ENCODE measurements at regions of chr17 and their contacts with region 1.

Region 1: GRCh38 chr17:59331129-59331928 is at the start of gene YPEL2:
- DNase-seq: peak; percentile 86 to 90 (median 88)
- H3K4me3 ChIP-seq: peak within 1 kb of the TSS; percentile 53 to 73
- H3K4me3 Mint-ChIP-seq: peak within 1 kb of the TSS; percentile 90 to 94 (median 93)
- H3K27ac ChIP-seq: peak within 1 kb of the TSS; percentile 62
- H3K27ac Mint-ChIP-seq: peak within 1 kb of the TSS; percentile 86 to 94 (median 92)
- H3K4me1 ChIP-seq: peaks cover 79% of the 10 kb centered on the region
- H3K4me1 Mint-ChIP-seq: peaks cover 53 to 83% (median 64%) of the 10 kb centered on the region in 4 donors
- H3K27me3 ChIP-seq: no peaks in the 10 kb centered on the region
- H3K27me3 Mint-ChIP-seq: no peaks in the 10 kb centered on the region
- total RNA-seq, gene YPEL2: 42.2 to 42.4 TPM

Region 2: DNA sequence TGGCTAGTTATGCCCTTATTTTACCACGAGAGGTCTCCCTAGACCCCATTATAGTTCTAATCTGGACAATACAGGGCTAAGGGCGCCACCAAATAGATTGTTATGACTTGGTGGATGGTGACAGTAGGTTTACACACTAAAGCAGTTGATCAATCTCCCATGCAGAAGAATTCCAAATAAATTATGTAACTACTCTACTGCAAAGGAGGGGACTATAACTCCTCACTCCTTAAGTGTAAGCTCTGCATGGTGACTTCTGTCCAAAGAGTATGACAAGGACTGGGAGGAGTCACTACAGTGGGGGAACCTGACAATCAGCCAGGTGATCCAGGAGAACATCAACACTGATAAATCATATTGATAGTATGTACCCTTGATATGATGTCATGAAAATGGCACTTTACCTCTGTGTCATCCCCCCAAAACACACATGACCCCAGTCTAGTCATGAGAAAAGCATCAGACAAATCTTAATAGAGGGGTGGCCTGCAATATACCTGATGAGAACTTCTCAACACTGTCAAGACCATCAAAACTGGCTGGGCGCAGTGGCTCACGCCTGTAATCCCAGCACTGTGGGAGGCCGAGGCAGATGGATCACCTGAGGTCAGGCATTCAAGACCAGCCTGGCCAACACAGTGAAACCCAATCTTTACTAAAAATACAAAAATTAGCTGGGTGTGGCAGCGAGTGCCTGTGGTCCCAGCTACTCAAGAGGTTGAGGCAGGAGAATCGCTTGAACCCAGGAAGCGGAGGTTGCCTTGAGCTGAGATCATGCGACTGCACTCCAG is 20.0 kb before region 1 on chr17:
- CTCF ChIA-PET with region 1: interaction called, 32 read pairs
- POLR2A ChIA-PET with region 1: interaction called, 8 read pairs
- intact Hi-C with region 1: loop called (anchors 1 kb)
- DNase-seq: peak; percentile 50 to 68 (median 63)
- H3K4me3 ChIP-seq: no peak overlapping the region
- H3K4me3 Mint-ChIP-seq: no peak overlapping the region
- H3K27ac ChIP-seq: no peak overlapping the region
- H3K27ac Mint-ChIP-seq: peak overlapping the region in 1 of 7 donors; percentile 23
- H3K4me1 ChIP-seq: no peaks in the 10 kb centered on the region
- H3K4me1 Mint-ChIP-seq: peaks cover 0 to 4% (median 4%) of the 10 kb centered on the region in 4 donors
- H3K27me3 ChIP-seq: no peaks in the 10 kb centered on the region
- H3K27me3 Mint-ChIP-seq: no peaks in the 10 kb centered on the region

Region 3: GRCh38 chr17:59361916-59362810 is 30.8 kb after region 1 on chr17:
- CTCF ChIA-PET with region 1: interaction called, 31 read pairs
- POLR2A ChIA-PET with region 1: interaction called, 55 read pairs
- intact Hi-C with region 1: loop called (anchors 1 kb)
- DNase-seq: peak; percentile 49 to 62 (median 59)
- H3K4me3 ChIP-seq: peak overlapping the region in 1 of 2 donors; percentile 21
- H3K4me3 Mint-ChIP-seq: peak overlapping the region; percentile 70 to 92 (median 81)
- H3K27ac ChIP-seq: peak overlapping the region; percentile 35
- H3K27ac Mint-ChIP-seq: peak overlapping the region; percentile 85 to 96 (median 86)
- H3K4me1 ChIP-seq: peaks cover 83% of the 10 kb centered on the region
- H3K4me1 Mint-ChIP-seq: peaks cover 57 to 89% (median 80%) of the 10 kb centered on the region in 4 donors
- H3K27me3 ChIP-seq: no peaks in the 10 kb centered on the region
- H3K27me3 Mint-ChIP-seq: no peaks in the 10 kb centered on the region

Region 4: GRCh38 chr17:59427425-59427921 is 96.1 kb after region 1 on chr17:
- CTCF ChIA-PET with region 1: interaction called, 45 read pairs
- POLR2A ChIA-PET with region 1: interaction called, 5 read pairs
- intact Hi-C with region 1: no loop called
- DNase-seq: no peak
- H3K4me3 ChIP-seq: no peak overlapping the region
- H3K4me3 Mint-ChIP-seq: no peak overlapping the region
- H3K27ac ChIP-seq: no peak overlapping the region
- H3K27ac Mint-ChIP-seq: peak overlapping the region in 1 of 7 donors; percentile 2
- H3K4me1 ChIP-seq: peaks cover 6% of the 10 kb centered on the region
- H3K4me1 Mint-ChIP-seq: peaks cover 0 to 7% (median 4%) of the 10 kb centered on the region in 4 donors
- H3K27me3 ChIP-seq: no peaks in the 10 kb centered on the region
- H3K27me3 Mint-ChIP-seq: peaks cover 1 to 4% of the 10 kb centered on the region in 2 donors

Region 5: GRCh38 chr17:59440784-59441441 is 109.6 kb after region 1 on chr17:
- CTCF ChIA-PET with region 1: interaction called, 145 read pairs
- POLR2A ChIA-PET with region 1: interaction called, 23 read pairs
- intact Hi-C with region 1: loop called (anchors 1 kb)
- DNase-seq: peak; percentile 78 to 83 (median 79)
- H3K4me3 ChIP-seq: no peak overlapping the region
- H3K4me3 Mint-ChIP-seq: peak overlapping the region; percentile 3 to 70 (median 19)
- H3K27ac ChIP-seq: no peak overlapping the region
- H3K27ac Mint-ChIP-seq: peak overlapping the region in 2 of 7 donors; percentile 25 to 46
- H3K4me1 ChIP-seq: peaks cover 20% of the 10 kb centered on the region
- H3K4me1 Mint-ChIP-seq: peaks cover 8 to 23% (median 17%) of the 10 kb centered on the region in 4 donors
- H3K27me3 ChIP-seq: no peaks in the 10 kb centered on the region
- H3K27me3 Mint-ChIP-seq: peaks cover 2 to 4% of the 10 kb centered on the region in 2 donors